ENCODE measurements at regions of chr14 and their contacts with region 1.

Region 1: DNA sequence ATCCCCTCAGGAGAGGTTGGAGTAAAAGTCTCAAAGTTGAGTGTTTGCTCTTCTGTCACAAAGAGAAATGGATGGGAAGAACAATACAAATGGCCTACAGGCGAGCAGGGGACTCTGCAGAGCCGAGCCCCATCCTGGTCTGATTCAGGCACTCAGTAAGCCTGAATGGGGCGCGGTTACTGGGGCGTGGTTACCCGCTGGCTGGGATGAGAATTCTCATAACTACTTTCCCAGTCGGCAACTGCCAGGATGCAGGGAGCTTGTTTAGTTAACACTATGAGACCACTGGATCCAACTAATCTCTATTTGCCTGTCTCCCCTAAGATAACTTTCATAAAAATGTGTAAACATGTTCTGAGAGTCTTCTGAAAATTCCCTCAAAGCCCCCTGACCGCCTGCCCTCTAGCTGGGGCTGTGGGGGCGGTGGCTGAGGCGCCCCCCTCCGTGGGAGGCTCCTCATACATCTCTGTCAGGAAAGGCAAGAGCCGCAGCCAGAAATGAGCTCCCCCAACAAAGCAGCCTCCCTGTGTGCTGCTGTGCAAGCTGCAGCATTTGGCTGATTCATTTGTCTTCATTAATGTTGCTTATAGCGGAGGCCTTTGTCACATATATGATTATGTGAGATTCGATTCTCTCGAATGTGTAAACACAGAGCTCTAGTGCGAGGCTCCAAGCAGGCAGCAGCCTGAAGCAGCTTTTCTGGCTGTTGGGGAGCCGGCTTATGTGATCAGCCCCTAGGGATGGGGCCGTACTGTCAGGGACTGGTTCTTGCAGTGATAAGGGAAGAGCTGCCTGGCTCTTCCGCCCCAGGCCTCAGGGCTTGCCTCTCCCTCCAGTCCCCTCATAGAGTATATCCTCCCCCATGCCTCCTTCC is 126.1 kb upstream of the ARHGAP5 start:
- DNase-seq: peak; percentile 67
- H3K4me3 Mint-ChIP-seq: no peak overlapping the region
- H3K27ac Mint-ChIP-seq: peak overlapping the region; percentile 37
- H3K4me1 Mint-ChIP-seq: peaks cover 45% of the 10 kb centered on the region
- H3K27me3 Mint-ChIP-seq: no peaks in the 10 kb centered on the region
- CTCF ChIP-seq: no peak

Region 2: DNA sequence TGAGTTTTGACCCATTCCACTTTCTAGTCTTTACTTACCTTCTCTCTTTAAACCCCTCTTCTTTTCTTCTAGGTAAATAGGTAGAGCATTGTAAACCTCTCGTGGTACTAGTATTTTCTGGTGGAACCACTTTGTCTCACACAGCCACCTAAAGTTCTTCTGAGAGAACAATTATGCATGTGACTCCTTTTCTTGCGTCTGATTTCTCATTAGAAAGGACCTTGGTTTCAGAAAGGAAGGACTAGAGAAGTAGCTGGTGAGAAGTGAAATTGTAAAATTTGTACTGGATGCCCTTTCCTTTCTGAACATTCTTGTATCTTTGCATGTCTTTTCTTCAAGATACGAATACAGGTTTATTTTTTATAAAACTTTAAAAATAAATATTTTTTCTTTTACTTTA is 290.8 kb before region 1 on chr14:
- CTCF ChIA-PET with region 1: no interaction called
- POLR2A ChIA-PET with region 1: no interaction called
- intact Hi-C with region 1: no loop called
- DNase-seq: no peak
- H3K4me3 Mint-ChIP-seq: no peak overlapping the region
- H3K27ac Mint-ChIP-seq: no peak overlapping the region
- H3K4me1 Mint-ChIP-seq: no peaks in the 10 kb centered on the region
- H3K27me3 Mint-ChIP-seq: no peaks in the 10 kb centered on the region
- CTCF ChIP-seq: no peak

Region 3: GRCh38 chr14:32009976-32010863 is 59.2 kb after region 1 on chr14:
- CTCF ChIA-PET with region 1: interaction called, 4 read pairs
- POLR2A ChIA-PET with region 1: interaction called, 25 read pairs
- intact Hi-C with region 1: no loop called
- DNase-seq: peak; percentile 71
- H3K4me3 Mint-ChIP-seq: no peak overlapping the region
- H3K27ac Mint-ChIP-seq: peak overlapping the region; percentile 62
- H3K4me1 Mint-ChIP-seq: peaks cover 38% of the 10 kb centered on the region
- H3K27me3 Mint-ChIP-seq: no peaks in the 10 kb centered on the region
- CTCF ChIP-seq: no peak

Measured in MCF 10A (cell line).